Activated CD8-positive, alpha-beta memory T cell treated with anti-CD3 and anti-CD28 coated beads, Interleukin-2, amount 10 ng/mL, durations not matched to agents 7 days and 5 days (primary cell): ENCODE measurements at regions of chr2 and their contacts with region 1.

Region 1: DNA sequence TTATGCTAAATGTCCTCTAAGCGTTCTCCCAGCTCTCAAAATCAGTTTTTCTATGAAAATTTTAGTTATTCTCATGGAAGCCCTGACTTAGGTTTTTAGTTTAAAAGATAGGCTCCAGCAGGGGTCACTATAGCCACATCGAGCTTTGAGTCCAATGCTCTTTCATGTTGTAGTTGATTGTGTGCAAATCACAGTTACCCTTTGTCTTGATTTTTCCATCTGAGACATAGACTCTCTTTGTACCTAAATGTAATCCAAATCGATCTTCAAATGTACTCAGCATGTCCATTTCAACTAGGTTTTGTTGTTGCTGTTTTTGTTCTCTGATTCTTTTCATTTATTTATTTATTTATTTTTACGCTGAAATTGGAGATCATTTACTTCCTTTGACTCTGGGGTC is 26.4 kb upstream of the MSTN start:
- DNase-seq: peak; percentile 53
- ATAC-seq: peak; percentile 53
- H3K4me3 Mint-ChIP-seq: no peak overlapping the region
- H3K27ac Mint-ChIP-seq: no peak overlapping the region
- H3K4me1 Mint-ChIP-seq: no peaks in the 10 kb centered on the region
- H3K27me3 Mint-ChIP-seq: no peaks in the 10 kb centered on the region

Region 2: GRCh38 chr2:190069936-190070696 is 18.8 kb before region 1 on chr2:
- CTCF ChIA-PET with region 1: no interaction called
- DNase-seq: no peak
- ATAC-seq: no peak
- H3K4me3 Mint-ChIP-seq: no peak overlapping the region
- H3K27ac Mint-ChIP-seq: no peak overlapping the region
- H3K4me1 Mint-ChIP-seq: no peaks in the 10 kb centered on the region
- H3K27me3 Mint-ChIP-seq: peaks cover 8% of the 10 kb centered on the region

Region 3: GRCh38 chr2:190159453-190159852 is 70.5 kb after region 1 on chr2:
- CTCF ChIA-PET with region 1: no interaction called
- DNase-seq: no peak
- ATAC-seq: no peak
- H3K4me3 Mint-ChIP-seq: no peak overlapping the region
- H3K27ac Mint-ChIP-seq: no peak overlapping the region
- H3K4me1 Mint-ChIP-seq: no peaks in the 10 kb centered on the region
- H3K27me3 Mint-ChIP-seq: peaks cover 5% of the 10 kb centered on the region

Region 4: DNA sequence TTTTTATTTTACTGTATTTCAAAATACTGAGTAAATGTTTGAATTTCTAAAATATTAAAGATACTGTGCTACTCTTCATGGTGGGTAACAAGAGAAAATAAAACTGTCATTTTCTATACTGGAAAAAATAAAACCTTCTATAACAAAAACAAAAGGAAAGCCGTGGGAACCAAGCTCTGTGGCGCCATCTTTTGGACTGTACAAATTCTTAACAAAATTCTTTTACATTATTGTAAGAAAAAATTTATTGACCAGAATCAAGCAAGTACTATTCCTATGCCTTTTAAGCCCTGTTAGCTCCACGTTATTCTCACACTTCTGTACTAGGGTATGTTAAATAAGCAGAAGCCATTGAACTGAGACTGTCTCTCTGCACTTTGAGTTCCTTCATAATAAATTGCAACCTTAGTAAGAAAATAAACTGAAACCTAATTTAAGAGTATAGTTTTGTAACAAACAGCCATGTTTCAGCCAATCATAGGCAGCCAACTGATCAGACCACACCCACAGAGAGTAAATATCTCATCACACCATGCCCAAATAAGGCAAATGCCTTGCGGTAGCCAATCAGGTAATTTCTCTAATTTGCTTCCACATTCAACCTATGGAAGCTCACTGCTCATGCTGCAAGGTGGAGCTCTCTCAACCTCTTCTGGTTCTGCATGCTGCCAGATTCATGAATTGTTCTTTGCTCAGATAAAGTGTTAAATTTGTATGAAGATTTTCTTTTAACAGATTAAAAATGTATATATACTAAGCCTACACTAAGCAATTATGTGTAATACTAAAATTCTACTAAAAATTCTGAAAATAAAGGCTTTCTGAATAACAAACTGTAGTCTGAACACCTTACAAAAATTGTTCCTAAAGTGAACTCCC is 188.6 kb after region 1 on chr2:
- CTCF ChIA-PET with region 1: interaction called, 20 read pairs
- DNase-seq: no peak
- ATAC-seq: peak; percentile 57
- H3K4me3 Mint-ChIP-seq: no peak overlapping the region
- H3K27ac Mint-ChIP-seq: no peak overlapping the region
- H3K4me1 Mint-ChIP-seq: peaks cover 3% of the 10 kb centered on the region
- H3K27me3 Mint-ChIP-seq: no peaks in the 10 kb centered on the region